AG04449 (cell line): ENCODE measurements at regions of chr3 and their contacts with region 1.

Region 1: GRCh38 chr3:124559881-124560574 is 170.2 kb upstream of the UMPS start:
- DNase-seq: peak; percentile 38
- H3K4me3 ChIP-seq: no peak overlapping the region
- CTCF ChIP-seq: peak; percentile 85

Region 2: DNA sequence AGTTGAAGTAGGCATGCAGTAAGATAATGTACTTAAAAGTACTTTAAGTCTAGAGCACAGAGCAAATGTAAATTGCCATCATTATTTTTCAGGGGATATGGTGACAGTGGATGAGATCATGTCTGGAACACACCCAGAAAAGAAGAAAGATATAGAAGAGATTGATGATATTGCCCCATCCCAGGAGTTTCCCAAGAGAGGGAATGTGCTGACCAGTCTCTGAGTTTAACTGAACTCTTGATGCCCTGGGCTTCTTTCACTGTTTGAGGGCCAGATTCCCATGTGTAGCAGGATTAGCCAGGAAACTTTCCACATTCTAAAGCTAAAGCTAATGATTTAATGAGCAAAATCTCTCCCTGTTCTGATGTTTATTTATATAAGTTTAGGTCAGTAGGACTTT is 196.6 kb before region 1 on chr3:
- CTCF ChIA-PET with region 1: interaction called, 14 read pairs
- POLR2A ChIA-PET with region 1: no interaction called
- DNase-seq: peak; percentile 68
- H3K4me3 ChIP-seq: no peak overlapping the region
- CTCF ChIP-seq: no peak

Region 3: GRCh38 chr3:124413989-124414598 is 145.9 kb before region 1 on chr3:
- CTCF ChIA-PET with region 1: no interaction called
- POLR2A ChIA-PET with region 1: no interaction called
- DNase-seq: no peak
- H3K4me3 ChIP-seq: no peak overlapping the region
- CTCF ChIP-seq: no peak

Region 4: GRCh38 chr3:124504332-124505059 is 55.5 kb before region 1 on chr3:
- CTCF ChIA-PET with region 1: interaction called, 19 read pairs
- POLR2A ChIA-PET with region 1: no interaction called
- DNase-seq: peak; percentile 65
- H3K4me3 ChIP-seq: no peak overlapping the region
- CTCF ChIP-seq: no peak

Region 5: GRCh38 chr3:124576565-124577493 is 16.8 kb after region 1 on chr3:
- CTCF ChIA-PET with region 1: interaction called, 86 read pairs
- POLR2A ChIA-PET with region 1: no interaction called
- DNase-seq: no peak
- H3K4me3 ChIP-seq: no peak overlapping the region
- CTCF ChIP-seq: no peak

Region 6: DNA sequence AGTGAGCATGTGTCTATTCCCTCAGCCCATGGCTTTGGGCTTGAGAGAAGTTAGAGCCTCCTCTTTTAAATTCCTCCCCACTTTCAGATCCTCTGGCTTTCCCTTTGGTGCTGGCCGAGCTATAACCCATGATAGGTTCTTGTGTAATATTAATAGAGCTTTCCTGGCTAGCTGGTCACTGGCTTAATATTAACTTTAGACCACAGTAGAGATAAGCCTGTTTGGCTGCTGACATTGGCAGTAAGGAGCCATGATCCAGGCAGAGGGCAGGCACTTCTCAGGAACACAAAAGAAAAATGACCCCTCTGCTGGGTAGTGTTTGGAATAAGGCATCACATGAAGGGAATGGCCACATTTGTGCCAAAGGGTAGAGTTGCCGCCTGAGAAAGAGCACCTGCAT is 104.8 kb after region 1 on chr3:
- CTCF ChIA-PET with region 1: interaction called, 14 read pairs
- POLR2A ChIA-PET with region 1: no interaction called
- DNase-seq: no peak
- H3K4me3 ChIP-seq: no peak overlapping the region
- CTCF ChIP-seq: no peak

Region 7: GRCh38 chr3:124730129-124730940 is 170.3 kb after region 1 on chr3 and contains the start of gene UMPS:
- CTCF ChIA-PET with region 1: interaction called, 14 read pairs
- POLR2A ChIA-PET with region 1: no interaction called
- DNase-seq: no peak
- H3K4me3 ChIP-seq: peak within 1 kb of the TSS; percentile 100
- CTCF ChIP-seq: no peak